Breast epithelium (tissue), 4 donors: ENCODE measurements at regions of chr10 and their contacts with region 1.

Region 1: GRCh38 chr10:117537436-117537903 is 5.1 kb upstream of the EMX2 start:
- DNase-seq: no peak
- H3K4me3 ChIP-seq: peak overlapping the region; percentile 9 to 52 (median 29)
- H3K27ac ChIP-seq: peak overlapping the region in 1 of 2 donors; percentile 43
- H3K4me1 ChIP-seq: peaks cover 4 to 15% of the 10 kb centered on the region in 2 donors
- H3K27me3 ChIP-seq: peaks cover 4 to 98% of the 10 kb centered on the region in 2 donors
- CTCF ChIP-seq: peak in 1 of 3 donors; percentile 54
- POLR2A ChIP-seq: no peak

Region 2: GRCh38 chr10:118827466-118828155 is 1290.1 kb after region 1 on chr10:
- intact Hi-C with region 1: loop called (anchors 5 kb)
- DNase-seq: no peak
- H3K4me3 ChIP-seq: no peak overlapping the region
- H3K27ac ChIP-seq: no peak overlapping the region
- H3K4me1 ChIP-seq: no peaks in the 10 kb centered on the region
- H3K27me3 ChIP-seq: no peaks in the 10 kb centered on the region
- CTCF ChIP-seq: no peak
- POLR2A ChIP-seq: no peak